Psoas muscle (tissue), 8 donors: ENCODE measurements at regions of chr15 and their contacts with region 1.

Region 1: DNA sequence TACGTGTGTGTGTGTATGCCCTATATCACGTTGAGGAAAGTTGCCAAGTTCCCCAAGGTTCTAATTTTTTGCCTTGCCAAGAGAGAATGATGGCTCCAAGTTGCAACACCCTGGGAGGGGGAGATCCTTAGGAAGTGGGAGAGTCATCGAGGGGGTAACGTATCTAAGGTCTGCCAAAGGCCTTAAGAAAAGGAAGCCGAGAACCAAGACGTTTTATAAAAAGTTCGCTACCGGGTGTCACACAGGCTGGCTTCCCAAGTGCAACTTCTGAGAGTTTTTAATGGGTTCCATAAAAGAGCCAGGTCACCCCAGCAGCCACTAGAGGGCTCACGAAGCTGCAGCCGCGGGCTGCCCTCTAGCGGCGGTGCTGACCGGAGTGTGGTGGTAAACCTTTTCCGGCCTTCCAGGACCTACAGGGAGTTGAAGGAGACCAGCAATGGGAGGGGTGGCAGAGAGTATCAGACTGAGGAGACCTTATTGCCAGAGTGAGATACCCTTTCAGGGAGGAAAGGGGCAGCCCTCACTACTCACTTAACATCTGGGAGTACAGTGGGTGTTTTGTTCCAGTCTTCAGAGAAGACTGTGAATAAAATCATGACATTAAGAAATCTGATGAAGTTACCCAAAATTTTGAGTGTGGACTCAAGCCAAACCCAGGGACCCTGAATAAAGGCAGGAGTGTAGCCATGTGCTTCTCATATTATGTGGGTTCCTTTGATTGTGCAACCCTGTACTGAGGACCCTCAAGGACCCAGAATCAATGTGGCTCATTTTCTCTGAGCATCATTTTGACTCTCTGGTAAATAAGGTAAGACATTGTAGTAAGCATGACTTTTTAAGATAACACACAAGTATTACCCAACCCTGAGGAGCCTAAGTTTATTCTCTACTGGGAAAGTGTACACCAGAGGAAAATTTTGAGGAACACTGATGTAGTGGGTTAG is 2.5 kb upstream of the RFX7 start:
- DNase-seq: peak; percentile 87 to 93
- ATAC-seq: peak; percentile 75 to 88 (median 84)
- H3K4me3 ChIP-seq: peak overlapping the region; percentile 78
- H3K27ac ChIP-seq: peak overlapping the region; percentile 87
- H3K4me1 ChIP-seq: peaks cover 23% of the 10 kb centered on the region
- H3K27me3 ChIP-seq: no peaks in the 10 kb centered on the region
- CTCF ChIP-seq: peak; percentile 99

Region 2: GRCh38 chr15:55993111-55993803 is 252.9 kb before region 1 on chr15 and contains the start of gene NEDD4:
- intact Hi-C with region 1: loop called (anchors 5 to 10 kb)
- DNase-seq: peak; percentile 89 to 92
- ATAC-seq: peak; percentile 93 to 95 (median 94)
- H3K4me3 ChIP-seq: peak within 1 kb of the TSS; percentile 82
- H3K27ac ChIP-seq: peak within 1 kb of the TSS; percentile 83
- H3K4me1 ChIP-seq: peaks cover 16% of the 10 kb centered on the region
- H3K27me3 ChIP-seq: no peaks in the 10 kb centered on the region
- CTCF ChIP-seq: peak; percentile 59
- total RNA-seq, gene NEDD4: 39.1 to 145 (median 82.1) TPM

Region 3: DNA sequence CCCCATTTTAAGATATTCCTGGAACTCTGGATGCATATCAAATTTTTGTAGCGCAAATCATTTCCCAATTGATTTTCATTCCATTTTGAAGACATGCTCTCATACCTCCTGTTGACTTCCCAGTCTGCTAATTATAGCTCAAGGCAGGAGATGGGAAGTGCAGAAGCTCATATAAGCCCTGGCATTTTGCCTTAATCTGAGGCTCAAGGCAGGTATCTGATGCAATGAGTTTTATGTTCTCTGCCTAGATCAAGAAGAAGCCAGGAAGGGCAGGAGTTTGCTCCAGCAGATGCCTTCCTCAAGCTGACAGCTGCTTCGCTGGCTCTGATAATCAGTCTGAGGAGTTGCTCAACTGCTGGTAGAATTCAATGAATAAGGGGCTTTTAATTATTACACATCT is 187.2 kb before region 1 on chr15:
- intact Hi-C with region 1: loop called in 1 of 2 experiments (anchors 5 kb)
- DNase-seq: no peak
- ATAC-seq: peak; percentile 75 to 97 (median 94)
- H3K4me3 ChIP-seq: no peak overlapping the region
- H3K27ac ChIP-seq: peak overlapping the region; percentile 61
- H3K4me1 ChIP-seq: peaks cover 4% of the 10 kb centered on the region
- H3K27me3 ChIP-seq: no peaks in the 10 kb centered on the region
- CTCF ChIP-seq: no peak

Region 4: DNA sequence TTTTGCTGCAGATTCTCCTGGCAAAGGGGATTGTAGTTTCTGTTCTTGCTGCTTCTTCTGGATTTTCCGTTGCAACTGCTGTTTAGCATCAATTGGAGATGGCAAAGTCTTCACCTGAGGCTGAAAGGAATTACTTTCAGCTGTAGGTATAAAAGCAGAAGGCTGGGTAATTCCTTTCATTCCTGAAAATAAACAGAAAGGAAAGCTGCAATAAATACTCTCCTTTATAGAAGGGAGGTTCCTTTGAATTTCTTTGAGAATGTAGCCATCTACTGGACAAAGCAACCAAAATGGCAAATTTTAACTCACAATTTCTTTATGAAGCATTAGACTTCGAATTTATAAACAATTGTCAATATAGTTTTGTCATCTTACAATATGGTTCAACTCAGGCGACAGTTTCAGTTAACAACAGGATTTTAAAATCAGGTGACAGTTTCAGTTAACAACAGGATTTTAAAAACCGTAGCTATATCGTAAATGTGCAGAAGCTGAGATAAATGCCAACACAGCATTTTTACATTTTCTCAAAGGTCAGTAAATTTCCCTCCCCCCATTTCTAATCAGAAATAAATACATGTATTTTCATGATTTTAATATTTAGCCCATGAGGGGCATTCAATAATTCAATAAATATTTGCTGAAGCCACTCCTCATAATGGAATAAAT is 147.8 kb before region 1 on chr15:
- intact Hi-C with region 1: loop called (anchors 2 to 10 kb)
- DNase-seq: no peak
- ATAC-seq: no peak
- H3K4me3 ChIP-seq: no peak overlapping the region
- H3K27ac ChIP-seq: peak overlapping the region; percentile 79
- H3K4me1 ChIP-seq: peaks cover 48% of the 10 kb centered on the region
- H3K27me3 ChIP-seq: no peaks in the 10 kb centered on the region
- CTCF ChIP-seq: peak; percentile 13

Region 5: GRCh38 chr15:56428821-56429458 is 182.8 kb after region 1 on chr15:
- intact Hi-C with region 1: loop called (anchors 2 to 5 kb)
- DNase-seq: no peak
- ATAC-seq: no peak
- H3K4me3 ChIP-seq: no peak overlapping the region
- H3K27ac ChIP-seq: no peak overlapping the region
- H3K4me1 ChIP-seq: no peaks in the 10 kb centered on the region
- H3K27me3 ChIP-seq: no peaks in the 10 kb centered on the region
- CTCF ChIP-seq: peak; percentile 51